B cell (primary cell): ENCODE measurements at regions of chr1 and their contacts with region 1.

Region 1: GRCh38 chr1:36506276-36506920 is 23.7 kb upstream of the CSF3R start:
- DNase-seq: no peak
- ATAC-seq: no peak
- H3K4me3 ChIP-seq: no peak overlapping the region
- H3K4me3 Mint-ChIP-seq: no peak overlapping the region
- H3K27ac ChIP-seq: no peak overlapping the region
- H3K27ac Mint-ChIP-seq: no peak overlapping the region
- H3K4me1 ChIP-seq: no peaks in the 10 kb centered on the region
- H3K4me1 Mint-ChIP-seq: no peaks in the 10 kb centered on the region
- H3K27me3 ChIP-seq: peaks cover 0 to 13% (median 4%) of the 10 kb centered on the region in 4 experiments
- H3K27me3 Mint-ChIP-seq: peaks cover 45% of the 10 kb centered on the region
- CTCF ChIP-seq: no peak

Region 2: GRCh38 chr1:36516372-36517325 is 10.3 kb after region 1 on chr1:
- CTCF ChIA-PET with region 1: interaction called, 11 read pairs
- POLR2A ChIA-PET with region 1: no interaction called
- intact Hi-C with region 1: no loop called
- DNase-seq: peak; percentile 64
- ATAC-seq: peak; percentile 24
- H3K4me3 ChIP-seq: no peak overlapping the region
- H3K4me3 Mint-ChIP-seq: no peak overlapping the region
- H3K27ac ChIP-seq: no peak overlapping the region
- H3K27ac Mint-ChIP-seq: no peak overlapping the region
- H3K4me1 ChIP-seq: no peaks in the 10 kb centered on the region
- H3K4me1 Mint-ChIP-seq: no peaks in the 10 kb centered on the region
- H3K27me3 ChIP-seq: no peaks in the 10 kb centered on the region
- H3K27me3 Mint-ChIP-seq: no peaks in the 10 kb centered on the region
- CTCF ChIP-seq: peak; percentile 84

Region 3: GRCh38 chr1:36625935-36626310 is 119.5 kb after region 1 on chr1:
- CTCF ChIA-PET with region 1: no interaction called
- POLR2A ChIA-PET with region 1: no interaction called
- intact Hi-C with region 1: no loop called
- DNase-seq: no peak
- ATAC-seq: no peak
- H3K4me3 ChIP-seq: no peak overlapping the region
- H3K4me3 Mint-ChIP-seq: no peak overlapping the region
- H3K27ac ChIP-seq: no peak overlapping the region
- H3K27ac Mint-ChIP-seq: no peak overlapping the region
- H3K4me1 ChIP-seq: no peaks in the 10 kb centered on the region
- H3K4me1 Mint-ChIP-seq: no peaks in the 10 kb centered on the region
- H3K27me3 ChIP-seq: no peaks in the 10 kb centered on the region
- H3K27me3 Mint-ChIP-seq: peaks cover 18% of the 10 kb centered on the region
- CTCF ChIP-seq: no peak